Tibial artery (tissue), 4 donors: ENCODE measurements at regions of chr3 and their contacts with region 1.

Region 1: GRCh38 chr3:160464321-160464720 is 14.7 kb upstream of the TRIM59 start:
- DNase-seq: no peak
- H3K4me3 ChIP-seq: no peak overlapping the region
- H3K27ac ChIP-seq: no peak overlapping the region
- H3K4me1 ChIP-seq: no peaks in the 10 kb centered on the region
- H3K27me3 ChIP-seq: no peaks in the 10 kb centered on the region
- CTCF ChIP-seq: no peak

Region 2: DNA sequence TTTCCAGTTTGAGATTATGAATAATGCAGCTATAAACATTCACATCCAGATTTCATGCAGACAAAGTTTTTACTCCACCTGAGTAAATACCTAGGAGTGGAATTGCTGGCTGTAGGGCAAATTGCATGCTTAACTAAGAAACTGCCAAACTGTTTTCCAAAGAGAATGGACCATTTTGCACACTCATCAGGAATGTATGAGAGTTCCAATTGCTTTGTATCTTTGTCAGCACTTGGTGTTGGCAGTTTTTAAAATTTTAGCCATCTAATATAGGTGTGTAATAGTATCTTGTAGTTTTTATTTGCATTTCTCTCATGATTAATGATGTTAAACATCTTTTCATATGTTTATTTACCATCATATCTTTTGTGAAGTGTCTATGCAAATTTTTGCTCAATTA is 25.8 kb after region 1 on chr3:
- intact Hi-C with region 1: loop called (anchors 1 kb)
- DNase-seq: no peak
- H3K4me3 ChIP-seq: no peak overlapping the region
- H3K27ac ChIP-seq: no peak overlapping the region
- H3K4me1 ChIP-seq: peaks cover 0 to 4% (median 0%) of the 10 kb centered on the region in 4 donors
- H3K27me3 ChIP-seq: no peaks in the 10 kb centered on the region
- CTCF ChIP-seq: no peak

Region 3: GRCh38 chr3:161343986-161344385 is 879.7 kb after region 1 on chr3:
- intact Hi-C with region 1: no loop called
- DNase-seq: no peak
- H3K4me3 ChIP-seq: no peak overlapping the region
- H3K27ac ChIP-seq: no peak overlapping the region
- H3K4me1 ChIP-seq: peaks cover 0 to 6% (median 0%) of the 10 kb centered on the region in 4 donors
- H3K27me3 ChIP-seq: no peaks in the 10 kb centered on the region
- CTCF ChIP-seq: no peak